ENCODE measurements at regions of chr1 and their contacts with region 1.

Region 1: DNA sequence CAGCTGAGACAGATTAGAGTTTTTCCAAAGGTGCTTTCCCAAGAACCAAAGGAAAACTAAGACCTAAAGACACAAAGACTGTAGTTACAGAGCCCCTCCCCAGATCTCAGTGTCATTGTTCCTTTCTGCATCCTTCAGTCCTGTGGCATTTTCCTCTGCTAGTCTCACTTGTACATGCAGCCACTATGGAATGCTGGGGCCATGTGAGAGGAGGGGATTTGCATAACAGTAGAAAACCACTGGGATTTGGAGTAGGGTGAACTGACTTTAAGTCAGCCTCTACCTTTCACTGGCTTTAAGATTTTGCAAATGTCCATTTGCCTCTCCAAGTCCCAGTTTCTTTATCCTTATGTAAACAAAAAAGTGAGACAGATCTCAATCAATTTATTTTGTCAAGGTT is 119.4 kb upstream of the F3 start:
- DNase-seq: no peak
- H3K4me3 ChIP-seq: no peak overlapping the region
- H3K27ac ChIP-seq: no peak overlapping the region
- H3K4me1 ChIP-seq: no peaks in the 10 kb centered on the region
- H3K27me3 ChIP-seq: no peaks in the 10 kb centered on the region
- CTCF ChIP-seq: no peak
- POLR2A ChIP-seq: no peak

Region 2: DNA sequence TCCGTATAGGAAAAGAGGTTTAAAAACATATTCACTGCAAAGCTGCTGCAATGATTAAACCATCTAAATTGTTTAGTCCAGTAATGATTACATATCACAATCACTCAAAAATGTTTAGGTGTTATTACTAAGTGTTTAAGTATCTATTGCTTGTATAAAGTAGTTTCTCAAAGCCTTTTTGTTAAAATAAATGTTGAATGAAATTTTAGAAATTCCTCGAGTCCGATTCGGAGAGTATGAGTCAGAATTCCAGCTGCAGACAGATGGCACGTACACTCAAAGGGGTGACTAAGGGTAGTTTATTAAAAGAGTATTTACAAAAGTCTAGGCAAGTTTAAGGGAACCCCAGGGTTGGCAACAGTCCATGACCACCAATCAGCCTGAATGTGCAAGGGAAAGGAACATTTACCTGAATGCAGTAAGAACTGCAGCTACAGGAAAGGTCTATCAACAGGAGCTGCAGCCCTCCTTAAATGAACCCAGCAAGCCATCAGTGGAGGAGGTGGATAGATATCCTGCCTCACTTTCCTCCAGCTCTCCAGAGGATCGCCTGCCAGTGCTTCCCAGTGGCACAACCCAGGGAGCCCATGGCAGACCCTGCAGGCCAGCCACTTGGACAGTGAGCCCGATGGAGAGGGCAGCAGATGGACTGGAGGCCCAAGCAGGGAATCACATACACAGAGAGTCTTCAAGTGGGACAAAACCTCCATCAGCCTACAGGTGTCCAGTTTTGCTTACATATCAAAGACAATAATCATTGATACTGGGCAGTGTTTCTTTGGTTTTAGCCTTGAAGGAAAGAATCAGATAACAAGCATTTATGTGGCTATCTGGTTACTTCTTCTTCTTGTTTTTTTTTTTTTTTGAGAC is 67.1 kb after region 1 on chr1:
- CTCF ChIA-PET with region 1: no interaction called
- POLR2A ChIA-PET with region 1: no interaction called
- dilution Hi-C with region 1: no loop called
- intact Hi-C with region 1: loop called (anchors 2 kb)
- DNase-seq: peak; percentile 73
- H3K4me3 ChIP-seq: no peak overlapping the region
- H3K27ac ChIP-seq: no peak overlapping the region
- H3K4me1 ChIP-seq: peaks cover 17% of the 10 kb centered on the region
- H3K27me3 ChIP-seq: no peaks in the 10 kb centered on the region
- CTCF ChIP-seq: no peak
- POLR2A ChIP-seq: no peak